Activated B cell treated with CpG ODN at 0.5 μM for 24 hours (primary cell): ENCODE measurements at regions of chr14 and their contacts with region 1.

Region 1: GRCh38 chr14:67285876-67286452 is 44.7 kb downstream of the PALS1 start:
- DNase-seq: no peak
- ATAC-seq: no peak
- H3K4me3 Mint-ChIP-seq: no peak overlapping the region
- H3K27ac Mint-ChIP-seq: no peak overlapping the region
- H3K4me1 Mint-ChIP-seq: no peaks in the 10 kb centered on the region
- H3K27me3 Mint-ChIP-seq: no peaks in the 10 kb centered on the region
- CTCF ChIP-seq: peak; percentile 40

Region 2: DNA sequence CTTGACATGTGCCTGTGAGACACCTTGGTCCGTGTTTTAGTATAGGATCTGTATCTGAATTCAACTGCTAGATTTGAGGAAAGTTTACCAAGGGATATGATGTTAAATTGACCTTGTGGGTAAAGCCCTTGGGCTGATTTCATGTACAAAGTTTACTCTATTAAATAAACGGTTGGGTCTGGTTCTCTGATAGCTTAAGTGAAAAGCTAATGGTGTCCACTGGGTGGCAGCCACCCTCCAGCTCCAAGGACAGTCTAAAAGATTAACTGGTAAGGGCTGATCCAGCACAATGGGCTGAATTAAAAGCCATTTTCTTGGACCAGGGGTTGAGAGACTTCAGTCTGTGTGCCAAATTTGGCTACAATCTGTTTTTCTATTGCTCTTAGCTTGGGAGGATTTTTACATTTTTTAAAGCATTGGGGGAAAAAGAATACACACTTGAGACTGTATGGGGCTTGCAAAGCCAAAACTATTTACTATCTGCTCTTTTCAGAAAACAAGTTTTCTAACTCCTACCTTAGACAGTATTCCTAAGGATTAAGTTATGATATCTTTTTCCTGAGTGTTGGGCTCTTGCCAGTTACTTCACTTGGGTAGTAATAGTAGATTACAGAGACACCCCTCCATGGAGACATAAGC is 661.5 kb before region 1 on chr14:
- CTCF ChIA-PET with region 1: interaction called, 23 read pairs
- POLR2A ChIA-PET with region 1: no interaction called
- intact Hi-C with region 1: no loop called
- DNase-seq: no peak
- ATAC-seq: peak; percentile 45
- H3K4me3 Mint-ChIP-seq: no peak overlapping the region
- H3K27ac Mint-ChIP-seq: no peak overlapping the region
- H3K4me1 Mint-ChIP-seq: no peaks in the 10 kb centered on the region
- H3K27me3 Mint-ChIP-seq: no peaks in the 10 kb centered on the region
- CTCF ChIP-seq: no peak

Region 3: GRCh38 chr14:67166450-67166853 is 119.5 kb before region 1 on chr14:
- CTCF ChIA-PET with region 1: interaction called, 43 read pairs
- POLR2A ChIA-PET with region 1: no interaction called
- intact Hi-C with region 1: loop called (anchors 1 kb)
- DNase-seq: no peak
- ATAC-seq: no peak
- H3K4me3 Mint-ChIP-seq: no peak overlapping the region
- H3K27ac Mint-ChIP-seq: no peak overlapping the region
- H3K4me1 Mint-ChIP-seq: no peaks in the 10 kb centered on the region
- H3K27me3 Mint-ChIP-seq: no peaks in the 10 kb centered on the region
- CTCF ChIP-seq: no peak